Transverse colon (tissue), 4 donors: ENCODE measurements at regions of chr15 and their contacts with region 1.

Region 1: GRCh38 chr15:101641166-101641764 is 10.9 kb downstream of the TM2D3 start:
- DNase-seq: peak; percentile 84
- H3K4me3 ChIP-seq: no peak overlapping the region
- H3K27ac ChIP-seq: peak overlapping the region; percentile 52 to 76 (median 60)
- H3K4me1 ChIP-seq: peaks cover 7 to 45% (median 15%) of the 10 kb centered on the region in 4 donors
- H3K27me3 ChIP-seq: no peaks in the 10 kb centered on the region
- CTCF ChIP-seq: peak; percentile 92 to 98 (median 94)
- EP300 ChIP-seq: no peak
- POLR2A ChIP-seq: no peak

Region 2: DNA sequence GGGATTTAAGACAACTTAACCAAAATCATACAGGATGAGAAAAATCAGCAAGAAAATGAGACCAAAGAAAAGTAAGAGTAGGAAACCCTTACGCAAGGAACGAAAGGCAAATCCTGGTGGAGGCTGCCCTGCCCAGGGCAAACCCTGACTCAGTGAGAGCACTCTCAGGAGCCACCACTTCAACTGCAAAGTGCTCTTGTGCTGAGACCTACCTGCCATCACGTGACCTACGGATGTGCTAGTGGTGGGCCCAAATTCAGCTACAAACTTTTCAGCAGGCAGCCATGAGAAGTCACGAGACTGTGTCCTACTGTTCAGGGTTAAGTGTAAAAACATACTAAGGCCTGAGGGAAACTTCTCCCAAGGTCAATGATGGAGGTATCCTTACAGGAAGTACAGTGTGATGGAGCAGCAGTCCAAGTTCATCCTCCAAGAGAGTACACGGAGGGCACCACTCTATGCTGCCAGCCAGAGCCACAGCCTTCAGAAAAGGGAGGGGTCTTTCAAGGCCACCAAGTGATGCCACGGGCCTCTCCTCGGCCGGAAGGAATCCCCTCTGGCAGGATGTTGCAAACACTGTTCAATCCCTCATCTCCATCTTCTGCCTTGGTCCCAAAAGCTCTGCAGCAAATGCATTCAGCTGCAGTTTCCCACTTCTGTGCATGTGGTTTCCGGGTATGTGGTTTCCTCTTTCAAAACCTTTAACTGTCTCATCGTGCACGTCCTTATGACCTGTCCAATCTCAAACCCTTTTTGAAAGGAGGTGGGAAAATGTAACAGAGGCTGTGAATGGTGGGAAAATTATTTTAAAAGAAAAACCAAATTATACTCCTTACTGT is 398.9 kb before region 1 on chr15:
- in situ Hi-C with region 1: no loop called
- intact Hi-C with region 1: no loop called
- DNase-seq: peak; percentile 45
- H3K4me3 ChIP-seq: no peak overlapping the region
- H3K27ac ChIP-seq: peak overlapping the region; percentile 41 to 68 (median 46)
- H3K4me1 ChIP-seq: peaks cover 0 to 76% (median 17%) of the 10 kb centered on the region in 4 donors
- H3K27me3 ChIP-seq: no peaks in the 10 kb centered on the region
- CTCF ChIP-seq: no peak
- EP300 ChIP-seq: no peak
- POLR2A ChIP-seq: no peak

Region 3: GRCh38 chr15:101294731-101295606 is 346.3 kb before region 1 on chr15 and contains the start of gene SNRPA1:
- in situ Hi-C with region 1: loop called (anchors 5 to 10 kb)
- intact Hi-C with region 1: no loop called
- DNase-seq: peak; percentile 98
- H3K4me3 ChIP-seq: peak within 1 kb of the TSS; percentile 80 to 92 (median 90)
- H3K27ac ChIP-seq: peak within 1 kb of the TSS; percentile 92 to 99 (median 98)
- H3K4me1 ChIP-seq: peaks cover 12 to 44% (median 22%) of the 10 kb centered on the region in 4 donors
- H3K27me3 ChIP-seq: no peaks in the 10 kb centered on the region
- CTCF ChIP-seq: peak in 1 of 5 experiments; percentile 5
- EP300 ChIP-seq: no peak
- POLR2A ChIP-seq: peak; percentile 85
- total RNA-seq, gene SNRPA1: 7.8 to 54.0 (median 25.8) TPM

Region 4: GRCh38 chr15:101305820-101306255 is 335.4 kb before region 1 on chr15:
- in situ Hi-C with region 1: no loop called
- intact Hi-C with region 1: loop called (anchors 2 kb)
- DNase-seq: peak; percentile 3
- H3K4me3 ChIP-seq: no peak overlapping the region
- H3K27ac ChIP-seq: no peak overlapping the region
- H3K4me1 ChIP-seq: no peaks in the 10 kb centered on the region
- H3K27me3 ChIP-seq: no peaks in the 10 kb centered on the region
- CTCF ChIP-seq: no peak
- EP300 ChIP-seq: no peak
- POLR2A ChIP-seq: no peak

Region 5: DNA sequence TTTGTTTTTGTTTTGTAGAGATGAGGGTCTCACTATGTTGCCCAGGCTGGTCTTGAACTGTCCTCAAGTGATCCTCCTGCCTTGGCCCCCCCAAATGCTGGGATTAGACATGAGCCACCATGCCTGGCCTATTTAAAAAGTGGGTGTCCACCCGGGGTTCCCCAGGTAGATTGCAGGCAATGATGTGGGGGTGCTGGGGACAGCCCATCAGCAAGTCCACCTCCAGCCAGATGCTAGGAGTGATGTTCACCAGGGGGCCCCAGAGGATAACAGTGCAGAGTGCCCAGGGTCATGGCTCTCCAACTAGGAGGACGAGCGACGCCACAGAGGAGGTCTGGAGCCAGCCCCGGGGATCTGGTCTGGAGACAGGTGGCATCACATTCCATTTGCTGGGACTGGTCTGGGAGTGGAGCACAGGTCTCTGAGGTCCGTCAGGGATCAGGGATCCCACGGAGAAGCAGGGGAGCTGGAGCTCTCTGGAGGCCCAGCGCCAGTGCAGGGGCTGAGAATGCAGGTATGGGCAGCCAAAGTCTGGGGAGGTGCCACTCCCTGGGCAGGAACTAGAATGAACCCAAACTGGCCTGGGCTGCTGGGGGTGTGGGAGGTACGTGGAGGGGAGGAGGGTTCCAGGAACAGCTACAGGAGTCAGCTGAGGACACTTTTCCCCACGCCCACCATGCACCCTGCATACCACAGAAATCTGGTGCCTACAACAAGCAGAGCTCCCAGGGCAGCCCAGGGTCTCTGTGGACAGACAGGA is 100.6 kb before region 1 on chr15:
- in situ Hi-C with region 1: no loop called
- intact Hi-C with region 1: no loop called
- DNase-seq: no peak
- H3K4me3 ChIP-seq: no peak overlapping the region
- H3K27ac ChIP-seq: no peak overlapping the region
- H3K4me1 ChIP-seq: peaks cover 0 to 3% (median 0%) of the 10 kb centered on the region in 4 donors
- H3K27me3 ChIP-seq: no peaks in the 10 kb centered on the region
- CTCF ChIP-seq: no peak
- EP300 ChIP-seq: no peak
- POLR2A ChIP-seq: no peak